HEK293 (cell line): ENCODE measurements at regions of chr11 and their contacts with region 1.

Region 1: GRCh38 chr11:36478700-36479329 is 31.3 kb downstream of the TRAF6 start:
- H3K4me3 ChIP-seq: no peak overlapping the region
- H3K27ac ChIP-seq: no peak overlapping the region
- H3K4me1 ChIP-seq: no peaks in the 10 kb centered on the region
- CTCF ChIP-seq: peak; percentile 42; the same call in 1 of the 2 replicates

Region 2: GRCh38 chr11:35485656-35486322 is 993.0 kb before region 1 on chr11:
- CTCF ChIA-PET with region 1: interaction called, 13 read pairs
- POLR2A ChIA-PET with region 1: no interaction called
- H3K4me3 ChIP-seq: no peak overlapping the region
- H3K27ac ChIP-seq: no peak overlapping the region
- H3K4me1 ChIP-seq: no peaks in the 10 kb centered on the region
- CTCF ChIP-seq: peak; percentile 45; the same call in 1 of the 2 replicates

Region 3: GRCh38 chr11:36289226-36289852 is 189.5 kb before region 1 on chr11 and contains the start of gene COMMD9:
- CTCF ChIA-PET with region 1: interaction called, 247 read pairs
- POLR2A ChIA-PET with region 1: interaction called, 5 read pairs
- H3K4me3 ChIP-seq: peak within 1 kb of the TSS; percentile 87
- H3K27ac ChIP-seq: no peak within 1 kb of the TSS
- H3K4me1 ChIP-seq: no peaks in the 10 kb centered on the region
- CTCF ChIP-seq: no peak

Region 4: GRCh38 chr11:36421546-36422155 is 57.2 kb before region 1 on chr11:
- CTCF ChIA-PET with region 1: interaction called, 10 read pairs
- POLR2A ChIA-PET with region 1: no interaction called
- H3K4me3 ChIP-seq: no peak overlapping the region
- H3K27ac ChIP-seq: no peak overlapping the region
- H3K4me1 ChIP-seq: no peaks in the 10 kb centered on the region
- CTCF ChIP-seq: no peak

Region 5: DNA sequence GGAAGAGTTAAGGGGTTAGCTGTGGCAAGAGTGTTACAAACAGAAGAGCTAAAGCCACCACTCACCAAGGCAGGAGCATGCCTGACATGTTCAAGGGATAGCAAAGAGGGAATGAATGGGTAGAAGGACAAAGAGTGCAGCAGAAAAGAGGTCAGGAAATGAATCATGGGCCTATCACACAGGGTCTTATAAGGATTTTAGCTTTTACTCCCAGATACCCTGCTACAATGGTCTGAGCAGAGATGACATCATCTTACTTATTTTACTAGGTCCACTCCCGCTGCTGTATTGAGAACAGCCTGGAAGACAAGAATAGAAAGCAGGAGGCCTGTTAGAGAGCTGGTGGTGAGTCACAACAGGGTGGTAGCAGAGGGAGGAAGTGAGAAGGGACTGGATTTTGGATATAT is 21.5 kb after region 1 on chr11:
- CTCF ChIA-PET with region 1: interaction called, 20 read pairs
- POLR2A ChIA-PET with region 1: interaction called, 5 read pairs
- H3K4me3 ChIP-seq: no peak overlapping the region
- H3K27ac ChIP-seq: no peak overlapping the region
- H3K4me1 ChIP-seq: no peaks in the 10 kb centered on the region
- CTCF ChIP-seq: no peak